Gastrocnemius medialis (tissue), 4 donors: ENCODE measurements at regions of chr7 and their contacts with region 1.

Region 1: GRCh38 chr7:155456738-155457564 is 978 bp upstream of the EN2 start:
- DNase-seq: peak; percentile 24 to 62
- ATAC-seq: peak; percentile 87 to 89
- H3K4me3 ChIP-seq: peak overlapping the region; percentile 47 to 77 (median 67)
- H3K27ac ChIP-seq: no peak overlapping the region
- H3K4me1 ChIP-seq: peaks cover 34 to 45% of the 10 kb centered on the region in 2 donors
- H3K27me3 ChIP-seq: peaks cover 86 to 94% (median 89%) of the 10 kb centered on the region in 3 donors
- CTCF ChIP-seq: no peak
- POLR2A ChIP-seq: peak in 1 of 2 donors; percentile 34

Region 2: DNA sequence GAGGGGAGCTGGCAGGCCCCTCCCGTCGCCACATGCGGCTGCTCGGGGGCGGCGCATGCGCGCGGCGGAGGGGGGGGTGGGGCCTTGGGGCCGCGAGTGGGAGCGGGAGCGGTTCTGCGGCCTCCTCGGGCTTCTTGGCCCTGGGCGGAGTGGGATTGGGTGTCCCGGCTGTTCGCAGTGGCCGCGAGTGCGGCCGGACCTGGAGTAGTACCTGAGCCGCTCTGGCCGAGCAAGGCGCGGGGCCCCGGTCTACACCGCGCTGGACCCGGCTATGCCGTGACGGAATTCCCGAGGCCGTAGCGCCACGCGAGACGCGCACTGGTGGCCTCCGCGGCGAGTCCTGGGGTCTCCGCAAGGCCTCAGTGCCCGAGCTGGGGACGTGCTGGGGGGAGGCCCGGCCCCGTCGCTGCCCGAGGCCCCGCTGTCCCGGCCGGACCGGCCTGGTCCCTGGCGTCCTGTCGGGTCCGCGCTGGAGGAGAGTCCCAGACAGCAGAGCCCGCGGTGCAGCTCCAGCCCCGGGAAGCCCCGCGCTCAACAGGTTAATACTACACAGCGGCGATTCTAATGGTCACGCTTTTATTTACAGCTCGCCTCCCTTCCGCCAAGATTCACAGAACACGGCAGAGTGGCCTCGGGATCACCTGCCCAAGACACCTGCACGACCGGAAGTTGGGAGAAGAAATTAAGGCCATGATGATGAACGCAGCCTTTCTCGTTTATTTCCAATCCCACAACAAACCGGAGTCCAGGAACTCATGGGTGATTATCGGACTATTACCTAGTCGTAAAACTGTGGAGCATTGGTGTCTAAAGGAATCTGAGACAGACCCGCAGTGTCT is 453.4 kb before region 1 on chr7:
- in situ Hi-C with region 1: no loop called
- intact Hi-C with region 1: loop called (anchors 5 kb)
- DNase-seq: peak; percentile 63 to 79
- ATAC-seq: peak; percentile 91 to 93
- H3K4me3 ChIP-seq: peak overlapping the region; percentile 74 to 96 (median 86)
- H3K27ac ChIP-seq: peak overlapping the region; percentile 87 to 97 (median 93)
- H3K4me1 ChIP-seq: peaks cover 17 to 18% of the 10 kb centered on the region in 2 donors
- H3K27me3 ChIP-seq: no peaks in the 10 kb centered on the region
- CTCF ChIP-seq: no peak
- POLR2A ChIP-seq: peak; percentile 85 to 86

Region 3: DNA sequence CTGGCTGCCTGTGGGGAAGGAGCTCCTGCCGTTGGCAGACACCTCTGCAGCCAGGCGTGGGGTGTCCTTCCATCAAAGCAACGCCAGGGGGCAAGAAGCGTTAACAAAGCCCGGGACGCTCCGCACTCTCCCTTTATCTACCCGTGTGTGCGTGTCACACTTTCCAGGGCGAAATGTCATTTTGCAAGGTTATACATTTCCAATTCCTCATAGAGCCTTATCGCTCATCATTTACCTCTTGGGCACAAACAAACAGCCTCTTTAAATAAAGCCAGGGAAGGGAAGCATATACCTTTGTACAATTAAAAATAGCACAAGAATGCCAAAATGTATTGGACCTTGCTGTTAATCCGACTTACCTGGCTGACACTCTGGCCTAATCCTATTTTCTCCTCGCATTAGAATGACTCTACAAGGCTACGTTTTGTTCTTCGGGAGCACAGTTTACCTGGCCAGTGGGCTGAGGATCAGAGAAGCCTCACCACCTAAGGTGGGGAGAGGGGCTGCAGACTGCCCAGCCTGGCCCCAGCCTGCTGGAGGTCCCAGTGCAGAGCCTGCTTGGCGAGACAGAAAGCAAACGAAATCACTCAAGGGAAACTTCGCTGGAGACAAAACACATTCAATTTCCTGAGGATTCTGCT is 76.6 kb before region 1 on chr7:
- in situ Hi-C with region 1: no loop called
- intact Hi-C with region 1: loop called (anchors 5 kb)
- DNase-seq: peak; percentile 33 to 56
- ATAC-seq: peak; percentile 49 to 85
- H3K4me3 ChIP-seq: no peak overlapping the region
- H3K27ac ChIP-seq: no peak overlapping the region
- H3K4me1 ChIP-seq: peaks cover 16 to 19% of the 10 kb centered on the region in 2 donors
- H3K27me3 ChIP-seq: peaks cover 91 to 99% (median 97%) of the 10 kb centered on the region in 3 donors
- CTCF ChIP-seq: peak; percentile 36 to 78 (median 49)
- POLR2A ChIP-seq: no peak

Region 4: GRCh38 chr7:156034397-156034796 is 577.4 kb after region 1 on chr7:
- in situ Hi-C with region 1: no loop called
- intact Hi-C with region 1: no loop called
- DNase-seq: no peak
- ATAC-seq: no peak
- H3K4me3 ChIP-seq: no peak overlapping the region
- H3K27ac ChIP-seq: no peak overlapping the region
- H3K4me1 ChIP-seq: no peaks in the 10 kb centered on the region
- H3K27me3 ChIP-seq: no peaks in the 10 kb centered on the region
- CTCF ChIP-seq: no peak
- POLR2A ChIP-seq: no peak